ENCODE measurements at regions of chr2 and their contacts with region 1.

Region 1: GRCh38 chr2:186641807-186642321 is 52.0 kb upstream of the FAM171B start:
- DNase-seq: peak in 3 of 5 donors; percentile 36 to 73 (median 70)
- H3K4me3 ChIP-seq: no peak overlapping the region
- H3K27ac ChIP-seq: no peak overlapping the region
- H3K4me1 ChIP-seq: no peaks in the 10 kb centered on the region
- H3K27me3 ChIP-seq: no peaks in the 10 kb centered on the region
- CTCF ChIP-seq: peak; percentile 88

Region 2: DNA sequence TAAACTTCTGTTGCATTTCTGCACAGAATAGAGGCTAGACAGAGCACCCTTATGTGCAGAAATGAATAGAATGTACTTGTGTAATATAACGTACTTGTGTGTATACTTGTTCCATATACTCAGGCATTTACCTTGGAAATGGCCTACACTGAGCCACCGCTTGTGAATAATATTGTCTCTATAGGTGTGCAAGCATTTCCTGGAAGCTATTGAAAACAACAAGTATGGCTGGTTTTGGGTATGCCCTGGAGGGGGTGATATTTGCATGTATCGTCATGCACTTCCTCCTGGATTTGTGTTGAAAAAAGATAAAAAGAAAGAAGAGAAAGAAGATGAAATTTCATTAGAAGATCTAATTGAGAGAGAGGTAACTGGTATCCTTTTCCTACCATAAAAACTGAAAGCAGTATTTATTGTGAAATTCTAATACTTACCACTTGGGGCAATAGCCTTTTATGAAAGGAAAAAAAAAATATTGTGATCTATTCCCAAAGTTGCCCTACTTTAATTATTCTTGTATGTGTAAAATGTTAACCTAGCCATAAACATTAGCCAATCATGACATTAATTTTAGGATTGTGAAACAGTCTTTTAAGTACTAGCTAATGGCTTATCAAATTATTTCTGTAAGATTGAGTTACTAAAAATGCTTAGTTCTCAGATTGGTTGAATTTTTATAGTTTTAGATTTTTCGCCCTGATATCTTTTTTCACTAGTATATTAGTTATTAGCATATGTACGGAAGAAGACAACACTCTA is 137.8 kb before region 1 on chr2:
- intact Hi-C with region 1: loop called (anchors 10 kb)
- DNase-seq: peak in 1 of 5 donors; percentile 52
- H3K4me3 ChIP-seq: no peak overlapping the region
- H3K27ac ChIP-seq: no peak overlapping the region
- H3K4me1 ChIP-seq: no peaks in the 10 kb centered on the region
- H3K27me3 ChIP-seq: no peaks in the 10 kb centered on the region
- CTCF ChIP-seq: peak; percentile 32

Region 3: DNA sequence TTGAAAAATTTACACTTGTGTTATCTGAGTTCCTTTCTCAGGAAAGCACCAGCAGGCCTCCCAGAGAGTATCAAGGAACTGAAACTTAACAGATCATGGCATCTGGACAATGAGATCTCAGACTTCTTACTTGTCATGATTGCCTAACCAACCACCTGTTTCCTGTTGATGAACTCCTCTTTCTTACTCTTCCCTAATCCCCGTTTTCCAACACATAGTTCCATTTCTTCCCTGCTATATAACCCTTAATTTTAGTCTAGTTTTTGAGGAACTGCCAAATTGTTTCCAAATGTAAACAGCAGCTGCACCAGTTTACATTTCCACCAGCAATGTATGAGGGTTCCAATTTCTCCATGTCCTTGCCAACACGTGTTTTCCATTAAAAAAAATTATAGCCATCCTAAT is 45.9 kb after region 1 on chr2:
- intact Hi-C with region 1: no loop called
- DNase-seq: no peak
- H3K4me3 ChIP-seq: no peak overlapping the region
- H3K27ac ChIP-seq: no peak overlapping the region
- H3K4me1 ChIP-seq: no peaks in the 10 kb centered on the region
- H3K27me3 ChIP-seq: no peaks in the 10 kb centered on the region
- CTCF ChIP-seq: no peak